A673 (cell line): ENCODE measurements at regions of chr11 and their contacts with region 1.

Region 1: GRCh38 chr11:63710476-63711217 is 29.3 kb downstream of the RTN3 start:
- DNase-seq: peak; percentile 37
- H3K4me3 ChIP-seq: no peak overlapping the region
- H3K27ac ChIP-seq: no peak overlapping the region
- H3K4me1 ChIP-seq: peaks cover 21% of the 10 kb centered on the region
- H3K27me3 ChIP-seq: no peaks in the 10 kb centered on the region
- CTCF ChIP-seq: 0 out of 2 replicates have a peak, but pooled peaks have one; percentile 15

Region 2: GRCh38 chr11:63567044-63567840 is 143.4 kb before region 1 on chr11:
- CTCF ChIA-PET with region 1: no interaction called
- POLR2A ChIA-PET with region 1: interaction called, 10 read pairs
- intact Hi-C with region 1: no loop called
- DNase-seq: peak; percentile 63
- H3K4me3 ChIP-seq: no peak overlapping the region
- H3K27ac ChIP-seq: no peak overlapping the region
- H3K4me1 ChIP-seq: peaks cover 6% of the 10 kb centered on the region
- H3K27me3 ChIP-seq: no peaks in the 10 kb centered on the region
- CTCF ChIP-seq: no peak